Mammary epithelial cell (primary cell): ENCODE measurements at regions of chr9 and their contacts with region 1.

Region 1: GRCh38 chr9:130940693-130941576 is 1.9 kb upstream of the FIBCD1 start:
- DNase-seq: peak; percentile 91
- H3K4me3 ChIP-seq: no peak overlapping the region
- H3K27ac ChIP-seq: no peak overlapping the region
- H3K4me1 ChIP-seq: peaks cover 12% of the 10 kb centered on the region
- H3K27me3 ChIP-seq: no peaks in the 10 kb centered on the region
- CTCF ChIP-seq: peak; percentile 73 to 95

Region 2: DNA sequence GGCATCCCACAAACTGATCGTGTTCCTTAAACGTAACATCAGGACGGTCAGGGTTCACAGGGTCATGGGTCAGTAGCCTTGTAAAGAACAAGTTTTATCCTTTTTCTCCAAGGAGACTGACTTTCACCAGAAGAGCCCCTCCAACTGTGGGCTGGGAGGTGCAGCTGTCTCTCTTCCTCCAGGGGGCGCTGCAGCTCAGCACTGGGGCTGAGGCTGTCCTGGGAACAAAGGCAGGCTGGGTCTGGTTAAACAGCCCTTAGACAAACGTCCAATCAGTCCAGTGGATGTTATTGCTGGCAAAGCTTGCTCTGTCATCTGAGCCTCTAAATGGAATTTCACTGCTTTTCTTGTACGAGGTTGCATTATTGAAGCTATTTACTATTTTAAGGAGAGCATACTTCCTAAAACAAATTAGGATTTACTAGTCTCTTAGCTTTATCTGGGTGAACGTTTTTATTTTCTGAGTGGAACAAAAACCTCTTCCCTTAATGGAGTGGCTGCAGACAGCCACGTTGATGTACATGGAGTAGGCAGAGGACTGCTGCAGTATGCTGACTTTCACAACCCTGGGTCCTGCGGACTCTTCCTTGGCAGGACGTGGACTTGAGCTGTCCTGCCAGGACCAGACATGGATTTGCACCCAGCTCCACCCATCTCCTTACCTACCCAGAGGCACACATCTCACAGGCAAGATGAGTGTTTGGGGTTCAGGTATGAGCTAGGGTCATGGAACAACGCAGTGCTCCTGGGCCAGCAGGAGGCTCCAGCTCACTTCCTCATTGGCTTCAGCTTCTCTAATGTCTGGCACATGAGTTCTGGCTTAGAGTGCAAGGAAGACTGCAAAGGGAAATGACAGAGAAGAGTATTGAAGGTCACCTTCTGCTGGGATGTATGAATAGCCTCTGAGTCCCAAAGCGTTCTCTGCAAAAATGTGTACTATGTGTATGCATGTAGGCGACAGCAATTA is 239.6 kb before region 1 on chr9:
- CTCF ChIA-PET with region 1: no interaction called
- dilution Hi-C with region 1: no loop called
- in situ Hi-C with region 1: no loop called
- intact Hi-C with region 1: loop called (anchors 2 kb)
- DNase-seq: peak; percentile 44
- H3K4me3 ChIP-seq: no peak overlapping the region
- H3K27ac ChIP-seq: no peak overlapping the region
- H3K4me1 ChIP-seq: peaks cover 7% of the 10 kb centered on the region
- H3K27me3 ChIP-seq: no peaks in the 10 kb centered on the region
- CTCF ChIP-seq: peak; percentile 88 to 93

Region 3: GRCh38 chr9:130770679-130771442 is 170.1 kb before region 1 on chr9:
- CTCF ChIA-PET with region 1: no interaction called
- dilution Hi-C with region 1: no loop called
- in situ Hi-C with region 1: loop called in 1 of 2 experiments (anchors 5 kb)
- intact Hi-C with region 1: loop called (anchors 5 kb)
- DNase-seq: peak; percentile 47
- H3K4me3 ChIP-seq: no peak overlapping the region
- H3K27ac ChIP-seq: no peak overlapping the region
- H3K4me1 ChIP-seq: peaks cover 10% of the 10 kb centered on the region
- H3K27me3 ChIP-seq: no peaks in the 10 kb centered on the region
- CTCF ChIP-seq: peak; percentile 45 to 60

Region 4: GRCh38 chr9:130866474-130866965 is 74.4 kb before region 1 on chr9:
- CTCF ChIA-PET with region 1: interaction called, 3 read pairs
- dilution Hi-C with region 1: no loop called
- in situ Hi-C with region 1: loop called in 1 of 2 experiments (anchors 5 kb)
- intact Hi-C with region 1: loop called (anchors 1 kb)
- DNase-seq: peak; percentile 87
- H3K4me3 ChIP-seq: peak overlapping the region in 1 of 3 experiments; percentile 43
- H3K27ac ChIP-seq: no peak overlapping the region
- H3K4me1 ChIP-seq: peaks cover 4% of the 10 kb centered on the region
- H3K27me3 ChIP-seq: no peaks in the 10 kb centered on the region
- CTCF ChIP-seq: peak; percentile 96 to 99

Region 5: DNA sequence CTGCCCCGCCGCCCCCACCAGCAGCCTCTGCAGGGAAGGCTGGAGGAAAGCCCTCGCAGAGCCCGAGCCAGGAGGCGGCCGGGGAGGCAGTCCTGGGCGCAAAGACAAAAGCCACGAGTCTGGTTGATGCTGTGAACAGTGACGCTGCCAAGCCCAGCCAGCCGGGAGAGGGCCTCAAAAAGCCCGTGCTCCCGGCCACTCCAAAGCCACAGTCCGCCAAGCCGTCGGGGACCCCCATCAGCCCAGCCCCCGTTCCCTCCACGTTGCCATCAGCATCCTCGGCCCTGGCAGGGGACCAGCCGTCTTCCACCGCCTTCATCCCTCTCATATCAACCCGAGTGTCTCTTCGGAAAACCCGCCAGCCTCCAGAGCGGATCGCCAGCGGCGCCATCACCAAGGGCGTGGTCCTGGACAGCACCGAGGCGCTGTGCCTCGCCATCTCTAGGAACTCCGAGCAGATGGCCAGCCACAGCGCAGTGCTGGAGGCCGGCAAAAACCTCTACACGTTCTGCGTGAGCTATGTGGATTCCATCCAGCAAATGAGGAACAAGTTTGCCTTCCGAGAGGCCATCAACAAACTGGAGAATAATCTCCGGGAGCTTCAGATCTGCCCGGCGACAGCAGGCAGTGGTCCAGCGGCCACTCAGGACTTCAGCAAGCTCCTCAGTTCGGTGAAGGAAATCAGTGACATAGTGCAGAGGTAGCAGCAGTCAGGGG is 55.8 kb before region 1 on chr9:
- CTCF ChIA-PET with region 1: no interaction called
- dilution Hi-C with region 1: no loop called
- in situ Hi-C with region 1: no loop called
- intact Hi-C with region 1: loop called (anchors 1 kb)
- DNase-seq: no peak
- H3K4me3 ChIP-seq: no peak overlapping the region
- H3K27ac ChIP-seq: peak overlapping the region; percentile 25
- H3K4me1 ChIP-seq: peaks cover 17% of the 10 kb centered on the region
- H3K27me3 ChIP-seq: no peaks in the 10 kb centered on the region
- CTCF ChIP-seq: no peak